Mammary epithelial cell (primary cell): ENCODE measurements at regions of chr12 and their contacts with region 1.

Region 1: GRCh38 chr12:108214486-108214885 is 85.4 kb downstream of the WSCD2 start:
- DNase-seq: no peak
- H3K4me3 ChIP-seq: no peak overlapping the region
- H3K27ac ChIP-seq: no peak overlapping the region
- H3K4me1 ChIP-seq: no peaks in the 10 kb centered on the region
- H3K27me3 ChIP-seq: peaks cover 2% of the 10 kb centered on the region
- CTCF ChIP-seq: no peak

Region 2: DNA sequence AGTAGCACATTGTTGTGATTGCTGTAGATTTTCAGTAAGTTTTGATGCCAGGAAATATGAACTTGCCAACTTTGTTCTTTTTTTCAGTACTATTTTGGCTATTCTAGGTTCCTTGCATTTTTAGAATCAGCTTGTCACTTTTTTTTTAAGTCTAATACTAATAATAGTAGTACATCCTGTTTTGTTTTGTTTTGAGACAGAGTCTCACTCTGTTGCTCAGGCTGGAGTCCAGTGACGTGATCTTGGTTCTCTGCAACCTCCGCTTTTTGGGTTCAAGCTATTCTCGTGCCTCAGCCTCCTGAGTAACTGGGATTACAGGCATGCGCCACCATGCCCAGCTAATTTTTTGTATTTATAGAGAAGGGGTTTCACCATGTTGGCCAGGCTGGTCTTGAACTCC is 512.4 kb before region 1 on chr12:
- CTCF ChIA-PET with region 1: no interaction called
- dilution Hi-C with region 1: no loop called
- in situ Hi-C with region 1: no loop called
- intact Hi-C with region 1: no loop called
- DNase-seq: no peak
- H3K4me3 ChIP-seq: no peak overlapping the region
- H3K27ac ChIP-seq: no peak overlapping the region
- H3K4me1 ChIP-seq: no peaks in the 10 kb centered on the region
- H3K27me3 ChIP-seq: no peaks in the 10 kb centered on the region
- CTCF ChIP-seq: no peak

Region 3: GRCh38 chr12:108146035-108146893 is 68.2 kb before region 1 on chr12:
- CTCF ChIA-PET with region 1: no interaction called
- dilution Hi-C with region 1: loop called (anchors 5 kb)
- in situ Hi-C with region 1: no loop called
- intact Hi-C with region 1: no loop called
- DNase-seq: no peak
- H3K4me3 ChIP-seq: no peak overlapping the region
- H3K27ac ChIP-seq: no peak overlapping the region
- H3K4me1 ChIP-seq: no peaks in the 10 kb centered on the region
- H3K27me3 ChIP-seq: peaks cover 2% of the 10 kb centered on the region
- CTCF ChIP-seq: no peak

Region 4: GRCh38 chr12:108381787-108382436 is 167.4 kb after region 1 on chr12:
- CTCF ChIA-PET with region 1: no interaction called
- dilution Hi-C with region 1: no loop called
- in situ Hi-C with region 1: no loop called
- intact Hi-C with region 1: loop called (anchors 5 kb)
- DNase-seq: no peak
- H3K4me3 ChIP-seq: no peak overlapping the region
- H3K27ac ChIP-seq: no peak overlapping the region
- H3K4me1 ChIP-seq: no peaks in the 10 kb centered on the region
- H3K27me3 ChIP-seq: no peaks in the 10 kb centered on the region
- CTCF ChIP-seq: no peak